ENCODE measurements at regions of chr3 and their contacts with region 1.

Region 1: DNA sequence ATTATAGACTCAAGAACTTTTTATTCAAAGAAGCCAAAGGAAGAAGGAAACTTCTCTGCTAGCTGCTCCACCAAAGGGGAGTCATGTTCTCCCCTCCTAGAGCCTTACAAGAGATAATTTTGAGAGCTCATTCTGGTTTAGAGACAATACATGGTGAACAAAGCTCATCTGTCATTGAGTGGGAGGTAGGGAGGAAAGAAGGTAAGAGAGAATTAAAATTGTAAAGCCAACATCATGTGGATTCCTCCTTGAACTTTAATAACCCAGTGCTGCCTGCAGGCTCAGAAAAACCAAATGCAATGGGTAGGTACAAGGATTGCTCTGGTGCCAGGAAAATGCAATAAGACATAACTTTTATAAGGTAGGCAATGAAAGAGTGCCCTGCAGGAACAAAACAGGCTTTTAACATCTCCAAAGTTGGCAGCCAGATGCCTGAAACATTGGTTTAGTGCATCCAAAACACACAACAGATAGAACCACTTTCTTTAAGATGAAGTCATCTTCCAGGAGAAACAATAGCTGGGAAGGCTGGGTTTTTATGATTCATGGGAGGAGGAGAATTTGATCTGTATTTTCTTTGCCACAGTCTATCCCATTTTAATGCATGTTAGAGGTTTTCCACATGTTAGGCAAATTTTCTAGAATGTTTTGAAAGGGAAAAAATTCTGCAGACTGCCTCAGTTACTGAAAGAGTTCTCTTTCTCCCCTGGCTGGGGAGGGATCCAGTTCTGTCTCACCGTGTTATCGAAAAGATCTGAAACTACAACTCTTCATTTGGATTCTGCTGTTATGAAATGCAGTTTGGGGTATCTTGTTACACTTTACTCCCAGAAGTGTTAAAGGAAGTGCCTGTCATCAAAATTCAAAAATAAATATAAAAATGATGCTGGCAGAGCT is 11.3 kb upstream of the ARHGEF3 start:
- DNase-seq: no peak
- ATAC-seq: no peak
- H3K4me3 ChIP-seq: no peak overlapping the region
- H3K4me3 Mint-ChIP-seq: peak overlapping the region; percentile 43
- H3K27ac ChIP-seq: peak overlapping the region in 1 of 2 experiments; percentile 65
- H3K27ac Mint-ChIP-seq: peak overlapping the region; percentile 53
- H3K4me1 ChIP-seq: peaks cover 39% of the 10 kb centered on the region
- H3K4me1 Mint-ChIP-seq: peaks cover 68% of the 10 kb centered on the region
- H3K27me3 ChIP-seq: no peaks in the 10 kb centered on the region
- H3K27me3 Mint-ChIP-seq: no peaks in the 10 kb centered on the region
- CTCF ChIP-seq: no peak

Region 2: DNA sequence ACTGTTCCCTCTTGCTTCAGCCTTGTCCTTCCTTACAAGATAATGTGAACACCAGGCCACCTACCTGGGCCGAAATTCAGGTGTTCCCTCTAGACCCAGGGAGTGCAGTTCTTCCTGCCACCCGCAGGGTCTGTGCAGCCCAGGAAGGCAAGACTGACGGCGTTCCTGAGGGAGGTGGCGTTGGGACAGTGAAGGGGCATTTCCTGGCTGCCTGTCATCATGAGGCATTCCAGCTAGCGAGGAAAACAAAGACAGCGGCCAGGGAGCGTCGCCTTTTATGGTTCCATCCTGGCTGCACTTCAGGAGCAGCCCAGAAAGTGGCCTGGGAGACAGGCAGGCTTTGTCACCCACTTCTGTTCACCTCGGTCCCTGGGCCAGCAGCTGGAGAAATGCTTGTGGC is 1241.1 kb before region 1 on chr3:
- CTCF ChIA-PET with region 1: no interaction called
- POLR2A ChIA-PET with region 1: no interaction called
- intact Hi-C with region 1: no loop called
- DNase-seq: no peak
- ATAC-seq: no peak
- H3K4me3 ChIP-seq: no peak overlapping the region
- H3K4me3 Mint-ChIP-seq: no peak overlapping the region
- H3K27ac ChIP-seq: no peak overlapping the region
- H3K27ac Mint-ChIP-seq: no peak overlapping the region
- H3K4me1 ChIP-seq: no peaks in the 10 kb centered on the region
- H3K4me1 Mint-ChIP-seq: no peaks in the 10 kb centered on the region
- H3K27me3 ChIP-seq: no peaks in the 10 kb centered on the region
- H3K27me3 Mint-ChIP-seq: no peaks in the 10 kb centered on the region
- CTCF ChIP-seq: no peak

Region 3: DNA sequence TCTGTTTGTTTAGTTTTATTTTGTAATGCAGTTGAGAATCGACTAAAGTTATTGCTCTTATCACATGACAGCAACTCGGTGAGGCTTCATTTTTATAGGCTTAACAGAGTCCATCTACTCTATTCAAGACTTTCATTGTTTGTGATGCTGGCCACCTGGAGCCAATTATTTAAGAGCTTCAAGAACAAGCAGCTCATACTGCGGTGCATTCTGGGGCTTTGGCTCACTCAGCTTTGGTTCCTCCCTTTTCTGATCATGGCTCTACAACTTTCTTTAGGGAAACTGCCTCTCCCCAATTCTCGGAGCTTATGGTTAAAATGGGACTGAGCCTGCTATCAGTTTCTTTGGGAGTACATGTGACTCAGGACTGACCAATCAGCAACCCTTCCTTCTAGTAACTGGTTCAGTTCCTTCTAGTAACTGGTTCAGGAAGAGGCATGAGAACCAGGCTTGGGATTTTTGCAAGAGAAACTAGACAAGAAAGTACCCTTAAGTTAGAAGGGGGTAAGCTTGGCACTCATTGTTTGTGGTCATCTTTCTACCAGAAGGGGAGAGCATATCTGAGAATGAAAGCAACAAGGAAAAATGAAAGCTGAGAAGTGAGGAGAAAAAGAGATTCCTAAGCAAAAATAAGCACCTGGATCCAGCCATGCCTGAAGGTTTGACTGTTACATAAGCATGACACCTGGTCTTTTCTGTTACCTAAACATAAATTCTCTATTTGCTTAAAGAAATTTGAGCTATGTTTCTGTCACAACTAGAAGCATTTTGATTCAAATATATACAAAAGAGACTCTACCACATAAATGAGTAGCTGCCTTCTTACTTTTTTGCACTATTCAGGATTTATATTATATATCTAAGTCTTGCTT is 12.8 kb after region 1 on chr3:
- CTCF ChIA-PET with region 1: interaction called, 4 read pairs
- POLR2A ChIA-PET with region 1: interaction called, 7 read pairs
- intact Hi-C with region 1: loop called in 1 of 2 experiments (anchors 2 kb)
- DNase-seq: no peak
- ATAC-seq: no peak
- H3K4me3 ChIP-seq: no peak overlapping the region
- H3K4me3 Mint-ChIP-seq: no peak overlapping the region
- H3K27ac ChIP-seq: no peak overlapping the region
- H3K27ac Mint-ChIP-seq: no peak overlapping the region
- H3K4me1 ChIP-seq: peaks cover 11% of the 10 kb centered on the region
- H3K4me1 Mint-ChIP-seq: peaks cover 35% of the 10 kb centered on the region
- H3K27me3 ChIP-seq: no peaks in the 10 kb centered on the region
- H3K27me3 Mint-ChIP-seq: no peaks in the 10 kb centered on the region
- CTCF ChIP-seq: no peak